GM12878 (cell line): ENCODE measurements at regions of chr1 and their contacts with region 1.

Region 1: DNA sequence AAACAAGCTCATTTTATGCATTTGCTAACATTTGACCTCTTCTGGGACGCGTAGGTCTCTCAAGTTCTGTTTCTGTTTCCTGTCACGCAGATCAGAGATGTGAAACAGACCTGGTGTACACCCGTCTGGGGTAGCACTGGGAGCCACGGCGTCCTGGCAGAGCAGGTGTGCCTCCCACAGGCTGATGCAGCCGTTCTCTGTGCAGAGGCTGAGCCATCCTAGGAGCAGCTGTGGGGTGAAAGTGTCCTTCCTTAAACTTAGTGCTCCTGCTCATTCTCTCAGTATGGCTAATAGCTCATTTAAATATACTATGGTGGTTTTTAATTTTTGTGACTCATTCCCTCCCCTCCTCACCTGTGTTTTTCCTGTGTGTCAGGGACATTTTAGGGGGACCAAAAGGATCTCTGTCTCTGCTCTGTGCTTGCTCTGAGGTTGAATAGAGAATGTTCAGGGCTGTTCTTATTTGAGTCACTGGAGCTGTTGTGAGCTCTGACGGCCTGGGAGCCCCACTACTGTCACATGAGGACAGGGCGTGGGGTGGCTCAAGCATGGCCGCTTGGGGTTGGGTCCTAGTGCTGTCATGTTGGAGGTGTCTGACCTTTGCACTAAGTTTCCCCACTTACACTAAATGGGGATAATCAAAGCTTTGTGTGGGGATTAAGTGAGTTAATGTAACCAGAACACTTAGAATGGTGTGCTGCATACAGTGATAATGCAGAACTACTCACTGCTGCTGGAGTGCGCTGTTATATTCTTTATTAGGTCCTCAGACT is 43.0 kb downstream of the GALNT2 start:
- DNase-seq: peak; percentile 88
- ATAC-seq: peak; percentile 90
- H3K4me3 ChIP-seq: no peak overlapping the region
- H3K27ac ChIP-seq: peak overlapping the region; percentile 64
- H3K4me1 ChIP-seq: peaks cover 57% of the 10 kb centered on the region
- H3K27me3 ChIP-seq: no peaks in the 10 kb centered on the region
- CTCF ChIP-seq: peak; percentile 27 to 49 (median 29); a peak in 4 of 6 replicates
- EP300 ChIP-seq: peak; percentile 56 to 81; a peak in 3 of 4 replicates
- POLR2A ChIP-seq: peak; percentile 64
- RAD21 ChIP-seq: peak; percentile 53

Region 2: GRCh38 chr1:229420765-229421164 is 689.3 kb before region 1 on chr1:
- CTCF ChIA-PET with region 1: no interaction called
- POLR2A ChIA-PET with region 1: no interaction called
- RAD21 ChIA-PET with region 1: no interaction called
- SMC1A ChIA-PET with region 1: no interaction called
- in situ Hi-C with region 1: no loop called
- intact Hi-C with region 1: no loop called
- DNase-seq: no peak
- ATAC-seq: peak; percentile 48
- H3K4me3 ChIP-seq: no peak overlapping the region
- H3K27ac ChIP-seq: no peak overlapping the region
- H3K4me1 ChIP-seq: no peaks in the 10 kb centered on the region
- H3K27me3 ChIP-seq: peaks cover 0 to 5% of the 10 kb centered on the region in 2 experiments; a peak in 1 of 4 replicates
- CTCF ChIP-seq: peak in 1 of 3 experiments; percentile 14; a peak in 2 of 6 replicates
- EP300 ChIP-seq: no peak
- POLR2A ChIP-seq: no peak
- RAD21 ChIP-seq: no peak

Region 3: GRCh38 chr1:229625915-229626831 is 483.9 kb before region 1 on chr1 and contains the starts of genes TAF5L and URB2:
- CTCF ChIA-PET with region 1: no interaction called
- POLR2A ChIA-PET with region 1: no interaction called
- RAD21 ChIA-PET with region 1: no interaction called
- SMC1A ChIA-PET with region 1: no interaction called
- in situ Hi-C with region 1: no loop called
- intact Hi-C with region 1: loop called (anchors 1 kb)
- DNase-seq: peak; percentile 38
- ATAC-seq: peak; percentile 93
- H3K4me3 ChIP-seq: peak within 1 kb of the TSS; percentile 99
- H3K27ac ChIP-seq: peak within 1 kb of the TSS; percentile 62
- H3K4me1 ChIP-seq: peaks cover 12% of the 10 kb centered on the region
- H3K27me3 ChIP-seq: no peaks in the 10 kb centered on the region
- CTCF ChIP-seq: no peak
- EP300 ChIP-seq: no peak
- POLR2A ChIP-seq: peak; percentile 89
- RAD21 ChIP-seq: no peak
- polyA plus RNA-seq, gene TAF5L: 1.1 to 1.3 TPM
- polyA plus RNA-seq, gene URB2: 2.7 to 3.6 TPM

Region 4: DNA sequence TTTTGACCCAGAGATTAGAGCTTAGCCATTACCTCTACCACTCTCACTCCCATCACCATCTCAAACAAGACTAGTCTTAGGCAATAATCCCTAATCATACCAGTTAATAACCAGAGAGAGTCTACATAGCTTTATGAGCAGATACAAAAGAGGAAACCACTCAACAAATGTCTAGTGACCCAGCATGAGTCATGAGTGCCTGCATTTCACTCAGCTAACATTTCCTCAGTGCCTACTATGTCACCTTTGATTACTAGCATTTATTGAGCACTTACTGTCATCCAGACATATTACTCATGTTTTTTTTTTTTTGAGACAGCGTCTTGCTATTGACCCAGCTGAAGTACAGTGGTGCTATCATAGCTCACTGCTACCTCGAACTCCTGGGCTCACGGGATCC is 79.0 kb before region 1 on chr1:
- CTCF ChIA-PET with region 1: no interaction called
- POLR2A ChIA-PET with region 1: no interaction called
- RAD21 ChIA-PET with region 1: no interaction called
- SMC1A ChIA-PET with region 1: no interaction called
- in situ Hi-C with region 1: no loop called
- intact Hi-C with region 1: no loop called
- DNase-seq: no peak
- ATAC-seq: no peak
- H3K4me3 ChIP-seq: no peak overlapping the region
- H3K27ac ChIP-seq: no peak overlapping the region
- H3K4me1 ChIP-seq: no peaks in the 10 kb centered on the region
- H3K27me3 ChIP-seq: no peaks in the 10 kb centered on the region
- CTCF ChIP-seq: no peak
- EP300 ChIP-seq: no peak
- POLR2A ChIP-seq: no peak
- RAD21 ChIP-seq: no peak

Region 5: DNA sequence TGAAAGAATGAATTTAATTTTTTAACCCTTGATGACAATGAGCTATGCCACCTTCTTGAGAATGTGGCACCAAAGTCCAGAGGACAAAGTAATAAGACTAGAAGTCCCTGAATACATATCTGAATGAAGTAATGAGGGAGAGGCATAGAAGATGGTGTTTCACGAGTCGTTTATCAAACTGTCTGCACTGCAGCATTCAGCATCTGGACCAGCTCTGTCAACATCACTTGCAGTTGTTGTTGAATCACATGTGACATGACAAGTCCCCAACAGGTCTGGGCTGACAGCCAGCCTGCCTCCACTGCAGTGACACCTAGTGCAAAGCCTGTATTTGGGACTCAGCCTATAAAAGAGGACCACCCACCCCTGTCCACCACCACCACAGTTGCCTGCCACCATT is 60.4 kb before region 1 on chr1:
- CTCF ChIA-PET with region 1: no interaction called
- POLR2A ChIA-PET with region 1: no interaction called
- RAD21 ChIA-PET with region 1: no interaction called
- SMC1A ChIA-PET with region 1: no interaction called
- in situ Hi-C with region 1: no loop called
- intact Hi-C with region 1: no loop called
- DNase-seq: no peak
- ATAC-seq: no peak
- H3K4me3 ChIP-seq: no peak overlapping the region
- H3K27ac ChIP-seq: no peak overlapping the region
- H3K4me1 ChIP-seq: no peaks in the 10 kb centered on the region
- H3K27me3 ChIP-seq: no peaks in the 10 kb centered on the region
- CTCF ChIP-seq: no peak
- EP300 ChIP-seq: no peak
- POLR2A ChIP-seq: no peak
- RAD21 ChIP-seq: no peak

Region 6: DNA sequence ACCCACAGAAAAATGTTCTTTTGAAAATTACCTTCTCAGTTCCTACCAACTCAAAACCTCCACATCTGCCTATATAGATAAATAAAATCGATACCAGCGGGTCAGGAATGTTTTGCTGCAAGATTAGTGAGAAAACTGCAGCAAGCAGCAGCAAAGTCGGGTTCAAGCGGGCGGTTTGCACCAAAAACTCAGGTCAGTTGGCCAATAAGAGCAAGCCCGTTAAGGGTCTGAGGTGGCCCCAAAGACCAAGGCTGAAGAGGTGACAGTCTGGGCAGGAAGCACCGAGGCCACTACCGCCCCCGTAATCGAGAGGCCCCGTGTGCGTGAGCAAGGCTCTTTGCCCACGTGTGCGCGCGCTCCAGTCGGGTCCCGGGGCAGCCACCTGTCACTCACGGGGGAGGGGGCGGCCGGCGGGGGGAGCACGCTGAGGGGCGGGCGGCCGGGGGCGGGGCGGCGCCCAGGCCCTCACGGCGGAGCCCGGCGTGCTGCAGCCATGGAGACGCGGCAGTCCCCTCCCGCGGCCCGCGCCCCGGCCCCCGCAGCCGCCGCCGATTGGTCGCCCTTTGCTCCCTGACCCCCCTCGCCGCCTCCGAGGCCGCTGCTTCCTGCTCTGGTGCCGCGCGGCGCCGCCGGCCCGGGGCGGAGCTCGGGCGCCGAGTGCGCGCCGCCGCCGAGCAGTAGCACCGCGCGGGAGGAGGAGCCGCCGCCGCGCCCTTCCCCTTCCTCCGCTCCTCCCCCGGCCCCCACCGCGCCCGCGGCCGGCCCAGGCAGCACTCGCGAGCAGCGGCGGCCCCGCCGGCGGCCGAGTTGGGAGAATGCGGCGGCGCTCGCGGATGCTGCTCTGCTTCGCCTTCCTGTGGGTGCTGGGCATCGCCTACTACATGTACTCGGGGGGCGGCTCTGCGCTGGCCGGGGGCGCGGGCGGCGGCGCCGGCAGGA is 43.3 kb before region 1 on chr1 and contains the start of gene GALNT2:
- CTCF ChIA-PET with region 1: interaction called, 10 read pairs
- POLR2A ChIA-PET with region 1: interaction called, 5 read pairs
- RAD21 ChIA-PET with region 1: interaction called, 12 read pairs
- SMC1A ChIA-PET with region 1: interaction called, 14 read pairs
- in situ Hi-C with region 1: no loop called
- intact Hi-C with region 1: loop called (anchors 2 kb)
- DNase-seq: peak; percentile 48
- ATAC-seq: peak; percentile 83
- H3K4me3 ChIP-seq: peak within 1 kb of the TSS; percentile 96
- H3K27ac ChIP-seq: peak within 1 kb of the TSS; percentile 77
- H3K4me1 ChIP-seq: no peaks in the 10 kb centered on the region; the same call in 1 of the 2 replicates
- H3K27me3 ChIP-seq: no peaks in the 10 kb centered on the region
- CTCF ChIP-seq: no peak
- EP300 ChIP-seq: peak; percentile 36 to 56; a peak in 1 of 4 replicates
- POLR2A ChIP-seq: peak; percentile 78
- RAD21 ChIP-seq: peak; percentile 20; the same call in 1 of the 2 replicates
- polyA plus RNA-seq, gene GALNT2: 0.52 to 1.2 TPM

Region 7: GRCh38 chr1:230132758-230133157 is 22.7 kb after region 1 on chr1:
- CTCF ChIA-PET with region 1: interaction called, 9 read pairs
- POLR2A ChIA-PET with region 1: interaction called, 3 read pairs
- RAD21 ChIA-PET with region 1: interaction called, 15 read pairs
- SMC1A ChIA-PET with region 1: interaction called, 10 read pairs
- in situ Hi-C with region 1: no loop called
- intact Hi-C with region 1: no loop called
- DNase-seq: no peak
- ATAC-seq: peak; percentile 40
- H3K4me3 ChIP-seq: no peak overlapping the region
- H3K27ac ChIP-seq: no peak overlapping the region; the same call in 1 of the 2 replicates
- H3K4me1 ChIP-seq: no peaks in the 10 kb centered on the region
- H3K27me3 ChIP-seq: no peaks in the 10 kb centered on the region
- CTCF ChIP-seq: no peak
- EP300 ChIP-seq: no peak
- POLR2A ChIP-seq: no peak
- RAD21 ChIP-seq: no peak